Calu3 (cell line): ENCODE measurements at regions of chr2 and their contacts with region 1.

Region 1: DNA sequence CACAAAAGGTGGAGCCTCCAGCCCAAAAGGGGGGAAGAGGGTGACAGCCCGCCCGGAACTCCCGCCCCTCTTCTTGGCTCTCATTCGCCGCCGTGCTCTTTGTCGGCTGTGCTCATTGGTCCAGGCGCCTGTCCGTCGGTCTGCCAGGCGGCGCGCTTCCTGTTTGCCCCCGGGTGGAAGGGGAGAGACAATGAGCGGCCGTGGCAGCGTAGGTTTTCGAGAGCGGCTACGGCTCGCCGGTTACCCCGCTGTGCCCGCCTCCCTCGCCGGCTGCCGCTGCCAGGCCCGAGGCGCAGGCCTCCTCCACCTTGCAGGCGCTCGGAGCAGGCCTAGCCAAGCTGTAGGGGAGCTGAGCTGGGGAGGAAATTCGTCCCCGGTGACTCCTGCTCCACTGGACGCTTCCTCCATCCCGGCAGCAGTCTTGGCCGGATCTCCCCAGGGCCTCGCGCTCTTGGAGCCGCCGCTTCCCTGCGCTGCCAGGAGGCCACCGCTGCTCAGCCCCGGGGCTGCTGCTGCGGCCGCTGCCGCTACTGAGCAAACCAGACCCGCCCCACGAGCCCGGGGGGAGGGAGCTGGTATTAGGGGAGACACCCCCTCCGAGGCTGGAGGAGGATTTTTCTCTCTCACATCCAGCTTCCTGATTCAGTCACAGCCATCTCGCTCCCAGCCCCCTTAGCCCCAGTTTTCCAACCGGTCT is at the start of gene SP3:
- DNase-seq: peak; percentile 96
- H3K4me3 Mint-ChIP-seq: peak within 1 kb of the TSS; percentile 96
- H3K27ac Mint-ChIP-seq: peak within 1 kb of the TSS; percentile 82
- H3K4me1 Mint-ChIP-seq: peaks cover 17% of the 10 kb centered on the region
- H3K27me3 Mint-ChIP-seq: no peaks in the 10 kb centered on the region
- CTCF ChIP-seq: no peak
- total RNA-seq, gene SP3: 78.0 and 82.5 TPM in 2 replicates

Region 2: GRCh38 chr2:173171924-173172643 is 793.4 kb before region 1 on chr2:
- CTCF ChIA-PET with region 1: no interaction called
- intact Hi-C with region 1: no loop called
- DNase-seq: no peak
- H3K4me3 Mint-ChIP-seq: peak overlapping the region; percentile 39
- H3K27ac Mint-ChIP-seq: peak overlapping the region; percentile 22
- H3K4me1 Mint-ChIP-seq: peaks cover 20% of the 10 kb centered on the region
- H3K27me3 Mint-ChIP-seq: no peaks in the 10 kb centered on the region
- CTCF ChIP-seq: no peak

Region 3: DNA sequence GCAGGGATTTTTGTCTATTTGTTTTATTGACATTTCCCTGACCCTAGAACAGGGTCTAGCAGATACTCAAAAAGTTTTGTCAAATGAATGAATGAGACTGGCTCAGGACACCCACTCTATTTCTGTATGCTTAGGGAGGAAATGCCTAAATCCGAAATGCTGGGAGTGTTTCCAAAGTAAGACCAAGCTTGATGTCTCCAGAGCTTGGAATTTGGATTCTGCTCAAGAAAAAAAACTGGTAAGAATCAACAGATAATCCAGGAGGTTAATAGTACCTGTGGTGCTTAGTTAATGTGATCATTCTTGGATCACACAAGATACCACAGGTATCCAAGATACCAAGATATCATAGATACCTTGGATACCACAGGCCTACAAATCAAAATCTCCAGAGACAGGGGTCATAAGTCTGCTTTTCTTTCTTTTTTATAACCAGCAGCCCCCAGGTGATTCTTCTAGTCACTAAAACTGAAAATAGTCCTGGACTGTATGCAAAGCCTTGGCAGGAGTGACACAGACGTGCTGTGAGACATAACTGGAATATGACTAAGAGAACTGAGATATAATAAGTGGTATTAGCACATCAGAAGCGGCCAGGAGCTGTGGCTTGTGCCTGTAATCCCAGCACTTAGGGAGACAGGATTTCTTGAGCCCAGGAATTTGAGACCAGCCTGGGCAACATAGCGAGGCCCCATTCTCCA is 39.6 kb after region 1 on chr2:
- CTCF ChIA-PET with region 1: no interaction called
- intact Hi-C with region 1: loop called (anchors 2 kb)
- DNase-seq: no peak
- H3K4me3 Mint-ChIP-seq: no peak overlapping the region
- H3K27ac Mint-ChIP-seq: no peak overlapping the region
- H3K4me1 Mint-ChIP-seq: peaks cover 25% of the 10 kb centered on the region
- H3K27me3 Mint-ChIP-seq: no peaks in the 10 kb centered on the region
- CTCF ChIP-seq: no peak

Region 4: GRCh38 chr2:174039551-174040416 is 74.3 kb after region 1 on chr2:
- CTCF ChIA-PET with region 1: no interaction called
- intact Hi-C with region 1: loop called (anchors 2 kb)
- DNase-seq: peak; percentile 90
- H3K4me3 Mint-ChIP-seq: no peak overlapping the region
- H3K27ac Mint-ChIP-seq: peak overlapping the region; percentile 67
- H3K4me1 Mint-ChIP-seq: peaks cover 32% of the 10 kb centered on the region
- H3K27me3 Mint-ChIP-seq: no peaks in the 10 kb centered on the region
- CTCF ChIP-seq: peak; percentile 88